Naive thymus-derived CD8-positive, alpha-beta T cell (primary cell): ENCODE measurements at regions of chr19 and their contacts with region 1.

Region 1: GRCh38 chr19:2269244-2269947 is 12.6 kb downstream of the PEAK3 start:
- DNase-seq: peak; percentile 98 to 100 (median 99)
- ATAC-seq: peak; percentile 77 to 85
- H3K4me3 Mint-ChIP-seq: peak overlapping the region; percentile 87 to 97 (median 90)
- H3K27ac Mint-ChIP-seq: peak overlapping the region; percentile 76 to 96 (median 93)
- H3K4me1 Mint-ChIP-seq: peaks cover 15 to 55% (median 40%) of the 10 kb centered on the region in 4 donors
- H3K27me3 Mint-ChIP-seq: no peaks in the 10 kb centered on the region

Region 2: GRCh38 chr19:2236314-2237050 is 32.9 kb before region 1 on chr19 and contains the starts of genes PLEKHJ1 and SF3A2:
- POLR2A ChIA-PET with region 1: interaction called, 262 read pairs
- DNase-seq: peak; percentile 97 to 100 (median 98)
- ATAC-seq: peak; percentile 79 to 84
- H3K4me3 Mint-ChIP-seq: peak within 1 kb of the TSS; percentile 90 to 100 (median 99)
- H3K27ac Mint-ChIP-seq: peak within 1 kb of the TSS; percentile 96 to 100 (median 100)
- H3K4me1 Mint-ChIP-seq: peaks cover 38 to 67% (median 63%) of the 10 kb centered on the region in 4 donors
- H3K27me3 Mint-ChIP-seq: peaks cover 0 to 4% (median 0%) of the 10 kb centered on the region in 5 donors
- polyA plus RNA-seq, gene PLEKHJ1: 85.2 to 106 (median 101) TPM
- polyA plus RNA-seq, gene SF3A2: 16.3 to 33.5 (median 26.0) TPM

Region 3: GRCh38 chr19:2282062-2282861 is 12.9 kb after region 1 on chr19 and contains the start of gene PEAK3:
- POLR2A ChIA-PET with region 1: interaction called, 132 read pairs
- DNase-seq: peak in 2 of 10 donors; percentile 31 to 41
- ATAC-seq: peak; percentile 55 to 64
- H3K4me3 Mint-ChIP-seq: peak within 1 kb of the TSS; percentile 46 to 83 (median 68)
- H3K27ac Mint-ChIP-seq: peak within 1 kb of the TSS in 9 of 10 donors; percentile 13 to 82 (median 58)
- H3K4me1 Mint-ChIP-seq: peaks cover 9 to 21% (median 16%) of the 10 kb centered on the region in 4 donors
- H3K27me3 Mint-ChIP-seq: no peaks in the 10 kb centered on the region
- polyA plus RNA-seq, gene PEAK3: 0.15 TPM in 1 of 3 donors, not detected in the others

Region 4: GRCh38 chr19:2302319-2303210 is 33.2 kb after region 1 on chr19:
- POLR2A ChIA-PET with region 1: interaction called, 13 read pairs
- DNase-seq: no peak
- ATAC-seq: peak; percentile 77 to 81
- H3K4me3 Mint-ChIP-seq: peak overlapping the region; percentile 37 to 86 (median 77)
- H3K27ac Mint-ChIP-seq: peak overlapping the region in 5 of 10 donors; percentile 20 to 72 (median 35)
- H3K4me1 Mint-ChIP-seq: peaks cover 5 to 29% (median 11%) of the 10 kb centered on the region in 4 donors
- H3K27me3 Mint-ChIP-seq: peaks cover 7 to 41% (median 19%) of the 10 kb centered on the region in 5 donors

Region 5: GRCh38 chr19:2328401-2329148 is 59.2 kb after region 1 on chr19 and contains the starts of genes LSM7 and SPPL2B:
- POLR2A ChIA-PET with region 1: interaction called, 13 read pairs
- DNase-seq: peak; percentile 88 to 96 (median 92)
- ATAC-seq: peak; percentile 63 to 70
- H3K4me3 Mint-ChIP-seq: peak within 1 kb of the TSS; percentile 95 to 100 (median 99)
- H3K27ac Mint-ChIP-seq: peak within 1 kb of the TSS; percentile 94 to 100 (median 99)
- H3K4me1 Mint-ChIP-seq: peaks cover 39 to 80% (median 75%) of the 10 kb centered on the region in 4 donors
- H3K27me3 Mint-ChIP-seq: no peaks in the 10 kb centered on the region
- polyA plus RNA-seq, gene LSM7: 187 to 197 (median 196) TPM
- polyA plus RNA-seq, gene SPPL2B: 10.5 to 17.3 (median 11.0) TPM

Region 6: GRCh38 chr19:2391118-2391725 is 121.8 kb after region 1 on chr19:
- POLR2A ChIA-PET with region 1: interaction called, 14 read pairs
- DNase-seq: peak in 8 of 10 donors; percentile 36 to 76 (median 48)
- ATAC-seq: peak; percentile 49 to 57
- H3K4me3 Mint-ChIP-seq: no peak overlapping the region
- H3K27ac Mint-ChIP-seq: peak overlapping the region in 3 of 10 donors; percentile 66 to 74 (median 73)
- H3K4me1 Mint-ChIP-seq: peaks cover 3 to 16% (median 5%) of the 10 kb centered on the region in 4 donors
- H3K27me3 Mint-ChIP-seq: peaks cover 0 to 6% (median 0%) of the 10 kb centered on the region in 5 donors